Mucosa of descending colon (tissue), 3 donors: ENCODE measurements at regions of chr9 and their contacts with region 1.

Region 1: DNA sequence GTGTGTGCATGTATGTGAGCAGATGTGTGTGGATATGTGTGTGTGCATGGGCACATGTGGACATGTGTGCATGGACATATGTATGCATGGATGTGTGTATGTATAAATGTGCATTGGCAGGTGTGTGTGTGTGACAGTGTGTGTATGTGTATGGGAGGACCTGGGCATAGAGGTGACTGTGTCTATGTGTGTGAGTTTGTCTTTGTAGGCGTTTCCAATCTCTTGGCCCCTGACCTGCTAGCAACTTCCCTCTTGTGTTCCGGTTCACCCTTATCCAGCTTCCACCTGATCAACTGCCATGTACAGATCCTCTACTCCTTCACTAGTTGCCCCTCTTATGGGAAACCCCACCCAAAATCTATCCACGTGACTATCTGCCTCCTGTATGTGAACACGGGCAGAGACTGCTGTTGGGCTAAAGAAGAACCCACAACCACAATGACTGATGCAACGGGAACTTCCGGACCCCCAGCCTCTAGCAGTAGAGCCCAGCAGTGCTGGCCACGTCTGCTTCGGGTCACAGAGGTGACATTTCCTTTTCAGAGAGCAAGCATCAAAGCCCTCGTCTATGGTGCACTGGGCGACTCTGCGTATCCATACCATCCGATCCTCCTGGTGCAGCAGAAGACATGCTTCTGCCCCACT is 24.9 kb upstream of the GADD45G start:
- DNase-seq: no peak
- ATAC-seq: peak; percentile 51
- H3K4me3 ChIP-seq: no peak overlapping the region
- H3K4me1 ChIP-seq: no peaks in the 10 kb centered on the region
- CTCF ChIP-seq: no peak

Region 2: GRCh38 chr9:89256642-89257041 is 323.2 kb before region 1 on chr9:
- intact Hi-C with region 1: no loop called
- DNase-seq: no peak
- ATAC-seq: no peak
- H3K4me3 ChIP-seq: no peak overlapping the region
- H3K4me1 ChIP-seq: no peaks in the 10 kb centered on the region
- CTCF ChIP-seq: no peak

Region 3: GRCh38 chr9:90860826-90861225 is 1281.0 kb after region 1 on chr9:
- intact Hi-C with region 1: loop called in 1 of 2 experiments (anchors 10 kb)
- DNase-seq: peak in 1 of 3 donors; percentile 13
- ATAC-seq: peak; percentile 9
- H3K4me3 ChIP-seq: no peak overlapping the region
- H3K4me1 ChIP-seq: no peaks in the 10 kb centered on the region
- CTCF ChIP-seq: no peak